Mammary epithelial cell (primary cell): ENCODE measurements at regions of chr9 and their contacts with region 1.

Region 1: DNA sequence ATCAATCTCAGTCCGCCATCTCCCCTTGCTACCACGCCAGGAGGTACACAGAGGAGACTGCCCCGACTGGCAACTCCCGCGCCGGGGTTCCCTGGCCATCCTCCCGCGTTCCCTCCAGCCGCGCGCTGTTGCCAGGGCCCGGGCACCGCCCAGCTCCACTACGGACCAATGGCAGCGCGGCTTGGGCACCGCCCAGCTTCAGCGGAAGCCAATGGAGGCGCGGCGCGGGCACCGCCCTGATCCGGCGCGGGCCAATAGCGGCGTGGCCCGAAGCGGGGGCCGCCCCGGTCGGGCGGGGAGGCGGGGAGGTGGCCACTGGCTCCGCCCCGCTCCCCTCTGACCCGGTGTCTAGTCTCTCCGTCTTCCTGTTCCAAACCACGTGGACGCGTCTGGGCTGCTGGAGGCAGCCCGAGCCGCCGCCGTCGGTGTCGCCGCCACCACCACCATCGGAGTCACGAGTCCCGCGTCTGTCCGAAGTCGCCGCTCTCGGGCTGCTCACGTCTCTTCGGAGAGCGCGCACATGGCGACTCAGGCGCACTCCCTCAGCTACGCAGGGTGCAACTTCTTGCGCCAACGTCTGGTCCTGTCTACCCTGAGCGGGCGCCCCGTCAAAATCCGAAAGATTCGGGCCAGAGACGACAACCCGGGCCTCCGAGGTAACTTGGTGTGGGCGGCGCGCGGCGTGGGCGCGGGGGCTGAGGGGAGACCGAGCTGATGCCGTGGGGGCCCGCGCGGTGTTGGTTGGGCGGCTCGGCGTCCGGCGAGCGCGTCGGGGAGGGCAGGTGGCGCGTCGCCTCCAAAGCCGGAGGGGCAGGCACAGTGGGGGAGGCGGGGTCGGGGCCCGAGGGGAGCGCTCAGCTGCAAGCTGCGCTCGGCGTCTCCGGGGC is at the start of gene RCL1:
- DNase-seq: peak; percentile 97
- H3K4me3 ChIP-seq: peak within 1 kb of the TSS; percentile 62 to 97 (median 94)
- H3K27ac ChIP-seq: peak within 1 kb of the TSS; percentile 68
- H3K4me1 ChIP-seq: peaks cover 10% of the 10 kb centered on the region
- H3K27me3 ChIP-seq: no peaks in the 10 kb centered on the region
- CTCF ChIP-seq: no peak
- total RNA-seq, gene RCL1: 20.7 to 24.2 TPM

Region 2: DNA sequence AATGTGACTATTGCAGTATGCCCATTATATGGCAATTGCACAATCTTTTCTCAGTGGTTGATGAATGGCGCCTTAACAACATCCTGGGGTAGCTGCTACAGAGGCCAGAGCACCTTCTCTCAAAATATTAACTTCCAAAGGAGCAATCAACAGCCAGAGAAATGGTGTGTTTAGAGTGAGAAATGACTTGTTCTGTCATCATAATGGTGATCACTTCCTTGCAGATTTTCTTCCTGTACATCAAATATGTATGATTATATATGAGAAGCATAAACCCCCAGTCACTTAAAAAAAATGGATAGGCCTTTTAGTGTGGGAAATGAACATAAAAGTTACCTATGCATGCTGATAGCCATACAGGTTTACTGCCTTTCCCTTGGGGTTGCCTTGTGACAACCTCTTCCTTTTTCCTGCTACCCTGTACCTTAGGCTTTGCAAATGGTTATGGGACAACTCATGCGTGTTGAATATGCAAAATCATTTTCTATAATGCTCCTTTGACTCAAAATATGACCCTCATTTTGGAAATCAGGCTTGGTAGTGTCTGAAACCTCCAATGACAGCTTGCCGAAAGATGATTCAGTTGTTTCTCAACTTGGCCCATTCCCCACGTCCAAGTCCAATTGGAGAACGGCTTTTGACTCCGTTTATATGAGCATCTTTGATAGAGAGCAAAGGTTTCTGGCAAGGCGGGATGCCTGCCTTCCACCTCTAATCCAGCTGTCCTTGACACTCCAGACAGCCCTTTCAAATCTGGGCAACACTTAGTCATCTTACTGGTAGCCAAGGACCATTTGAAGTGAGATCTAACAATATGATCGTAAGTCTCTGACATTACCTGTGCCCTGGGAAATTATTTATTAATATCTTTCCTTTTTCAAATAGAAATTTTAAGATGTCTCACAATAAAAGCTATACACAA is 233.3 kb before region 1 on chr9:
- CTCF ChIA-PET with region 1: no interaction called
- dilution Hi-C with region 1: no loop called
- in situ Hi-C with region 1: no loop called
- intact Hi-C with region 1: no loop called
- DNase-seq: no peak
- H3K4me3 ChIP-seq: no peak overlapping the region
- H3K27ac ChIP-seq: no peak overlapping the region
- H3K4me1 ChIP-seq: no peaks in the 10 kb centered on the region
- H3K27me3 ChIP-seq: no peaks in the 10 kb centered on the region
- CTCF ChIP-seq: no peak

Region 3: DNA sequence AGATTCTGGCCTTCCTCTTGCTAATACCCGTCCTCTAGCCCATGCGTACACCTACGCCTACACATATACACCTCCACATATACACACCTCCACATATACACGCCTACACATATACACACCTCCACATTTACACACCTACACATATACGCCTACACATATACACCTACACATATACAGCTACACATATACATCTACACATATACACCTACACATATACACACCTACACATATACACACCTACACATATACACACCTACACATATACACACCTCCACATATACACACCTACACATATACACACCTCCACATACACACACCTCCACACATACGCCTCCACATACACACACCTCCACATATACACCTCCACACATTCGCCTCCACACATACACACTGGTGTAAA is 79.0 kb before region 1 on chr9:
- CTCF ChIA-PET with region 1: no interaction called
- dilution Hi-C with region 1: no loop called
- in situ Hi-C with region 1: no loop called
- intact Hi-C with region 1: no loop called
- DNase-seq: no peak
- H3K4me3 ChIP-seq: no peak overlapping the region
- H3K27ac ChIP-seq: no peak overlapping the region
- H3K4me1 ChIP-seq: no peaks in the 10 kb centered on the region
- H3K27me3 ChIP-seq: no peaks in the 10 kb centered on the region
- CTCF ChIP-seq: no peak

Region 4: DNA sequence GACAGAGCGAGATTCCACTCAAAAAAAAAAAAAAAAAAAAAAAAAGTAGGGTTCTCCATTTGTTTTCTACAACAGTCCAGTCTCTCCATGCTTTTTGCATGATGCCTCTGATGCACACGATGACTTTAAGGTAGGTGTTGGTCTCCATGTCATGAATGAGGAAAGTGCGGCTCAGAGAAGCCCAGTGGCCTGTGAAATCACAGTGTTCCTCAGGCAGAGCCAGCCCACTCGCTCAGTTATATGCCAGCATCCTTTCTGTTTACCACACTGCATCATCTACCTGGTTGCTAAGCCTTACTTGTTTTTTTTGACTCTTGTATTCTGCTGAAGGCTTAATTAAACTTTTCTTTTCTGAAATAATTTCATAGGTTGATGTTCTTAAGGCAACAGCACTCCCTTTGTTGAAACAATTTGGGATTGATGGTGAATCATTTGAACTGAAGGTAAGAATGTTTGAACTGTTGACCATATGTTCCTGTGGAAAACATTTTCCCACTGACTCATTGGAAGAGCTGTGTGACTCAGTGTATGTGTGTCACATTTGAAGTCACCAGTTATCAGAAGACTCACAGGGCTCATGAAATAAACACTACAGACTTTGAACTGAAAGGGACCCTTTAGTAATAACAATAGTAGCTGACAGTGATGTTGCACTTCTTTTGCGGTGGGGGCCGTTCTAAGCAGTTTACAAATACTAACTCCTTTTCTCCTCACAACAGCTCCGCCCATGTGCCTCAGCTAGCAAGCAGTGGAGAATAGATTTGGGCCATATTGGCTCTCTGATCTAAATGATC is 40.2 kb after region 1 on chr9:
- CTCF ChIA-PET with region 1: no interaction called
- dilution Hi-C with region 1: no loop called
- in situ Hi-C with region 1: no loop called
- intact Hi-C with region 1: loop called (anchors 5 kb)
- DNase-seq: peak; percentile 99
- H3K4me3 ChIP-seq: no peak overlapping the region
- H3K27ac ChIP-seq: peak overlapping the region; percentile 84
- H3K4me1 ChIP-seq: peaks cover 40% of the 10 kb centered on the region
- H3K27me3 ChIP-seq: no peaks in the 10 kb centered on the region
- CTCF ChIP-seq: no peak

Region 5: DNA sequence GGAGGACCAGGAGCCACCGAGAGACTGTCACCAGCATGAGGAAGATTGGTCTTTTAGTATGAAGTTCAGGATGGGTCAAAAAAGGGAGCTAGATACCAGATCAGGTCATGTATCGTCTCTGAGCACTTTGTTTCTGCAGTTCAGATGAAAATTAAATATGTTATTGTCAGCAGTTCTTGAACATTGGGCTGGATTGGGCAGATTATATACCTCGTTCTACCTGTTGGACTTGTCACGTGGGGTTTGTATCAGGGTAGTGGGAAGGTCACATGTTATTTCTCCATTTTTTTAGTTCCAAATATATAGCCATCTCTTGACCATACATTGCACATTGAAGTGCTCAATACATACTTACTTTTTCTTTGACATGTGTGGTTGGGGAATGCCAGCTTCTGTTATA is 47.2 kb after region 1 on chr9:
- CTCF ChIA-PET with region 1: no interaction called
- dilution Hi-C with region 1: no loop called
- in situ Hi-C with region 1: no loop called
- intact Hi-C with region 1: loop called (anchors 1 kb)
- DNase-seq: no peak
- H3K4me3 ChIP-seq: no peak overlapping the region
- H3K27ac ChIP-seq: no peak overlapping the region
- H3K4me1 ChIP-seq: peaks cover 2% of the 10 kb centered on the region
- H3K27me3 ChIP-seq: no peaks in the 10 kb centered on the region
- CTCF ChIP-seq: no peak

Region 6: GRCh38 chr9:4850603-4851310 is 57.9 kb after region 1 on chr9:
- CTCF ChIA-PET with region 1: no interaction called
- dilution Hi-C with region 1: loop called (anchors 5 kb)
- in situ Hi-C with region 1: no loop called
- intact Hi-C with region 1: no loop called
- DNase-seq: no peak
- H3K4me3 ChIP-seq: no peak overlapping the region
- H3K27ac ChIP-seq: no peak overlapping the region
- H3K4me1 ChIP-seq: no peaks in the 10 kb centered on the region
- H3K27me3 ChIP-seq: no peaks in the 10 kb centered on the region
- CTCF ChIP-seq: no peak